Ascending aorta (tissue), 2 donors: ENCODE measurements at regions of chr3 and their contacts with region 1.

Region 1: GRCh38 chr3:136752422-136753325 is 496 bp upstream of the STAG1 start:
- DNase-seq: peak; percentile 91 to 99
- H3K4me3 ChIP-seq: peak overlapping the region; percentile 92 to 93
- H3K27ac ChIP-seq: peak overlapping the region; percentile 97 to 98
- H3K4me1 ChIP-seq: peaks cover 0 to 22% of the 10 kb centered on the region in 2 donors
- H3K27me3 ChIP-seq: no peaks in the 10 kb centered on the region
- CTCF ChIP-seq: peak in 2 of 3 experiments; percentile 39 to 97

Region 2: GRCh38 chr3:135965506-135966270 is 787.0 kb before region 1 on chr3 and contains the start of gene PPP2R3A:
- intact Hi-C with region 1: loop called (anchors 2 kb)
- DNase-seq: peak; percentile 47 to 93
- H3K4me3 ChIP-seq: peak within 1 kb of the TSS; percentile 76 to 92
- H3K27ac ChIP-seq: peak within 1 kb of the TSS; percentile 94 to 95
- H3K4me1 ChIP-seq: peaks cover 0 to 16% of the 10 kb centered on the region in 2 donors
- H3K27me3 ChIP-seq: no peaks in the 10 kb centered on the region
- CTCF ChIP-seq: no peak
- total RNA-seq, gene PPP2R3A: 10.5 TPM

Region 3: DNA sequence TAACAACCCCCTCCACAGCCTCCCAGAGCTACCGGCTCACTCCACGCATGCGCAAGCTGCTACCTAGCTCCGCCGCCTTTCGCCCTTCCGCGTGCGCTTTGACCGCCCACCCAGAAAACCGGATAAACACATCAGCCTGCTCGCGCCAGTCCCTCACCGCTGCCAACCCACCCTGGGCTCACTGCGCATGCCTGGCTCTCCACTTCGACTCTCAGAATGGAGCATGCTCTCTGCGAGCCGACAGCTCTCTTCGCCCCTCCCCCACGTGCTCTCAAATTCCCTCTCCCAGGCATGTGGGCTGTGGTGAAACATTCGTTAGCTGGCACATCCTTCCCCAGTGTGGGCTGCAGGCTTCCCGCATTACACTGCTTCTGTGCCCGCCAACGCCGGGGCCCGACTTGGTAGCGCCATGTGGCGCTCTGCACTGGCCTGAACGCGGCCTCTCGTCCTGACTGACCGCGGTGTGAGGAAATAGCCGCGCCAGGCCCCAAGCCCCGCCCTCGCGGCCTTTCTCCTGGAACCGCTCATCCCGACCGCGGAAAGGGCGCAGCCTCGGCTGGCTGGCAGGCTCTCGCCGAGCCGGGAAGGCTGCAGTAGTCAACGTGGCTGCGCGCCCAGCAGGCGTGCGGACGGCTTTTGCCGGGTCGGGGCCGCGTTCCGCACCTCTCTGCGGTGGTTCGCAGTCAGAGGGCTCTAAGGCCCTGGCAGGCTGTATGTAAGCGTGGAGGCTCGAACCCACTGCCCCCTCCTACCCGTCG is 556.1 kb before region 1 on chr3:
- intact Hi-C with region 1: loop called (anchors 1 kb)
- DNase-seq: peak; percentile 96 to 99
- H3K4me3 ChIP-seq: peak overlapping the region; percentile 69 to 93
- H3K27ac ChIP-seq: peak overlapping the region; percentile 99 to 100
- H3K4me1 ChIP-seq: peaks cover 3 to 18% of the 10 kb centered on the region in 2 donors
- H3K27me3 ChIP-seq: no peaks in the 10 kb centered on the region
- CTCF ChIP-seq: no peak

Region 4: GRCh38 chr3:136396916-136397315 is 355.8 kb before region 1 on chr3:
- intact Hi-C with region 1: loop called (anchors 10 kb)
- DNase-seq: no peak
- H3K4me3 ChIP-seq: no peak overlapping the region
- H3K27ac ChIP-seq: no peak overlapping the region
- H3K4me1 ChIP-seq: peaks cover 0 to 11% of the 10 kb centered on the region in 2 donors
- H3K27me3 ChIP-seq: no peaks in the 10 kb centered on the region
- CTCF ChIP-seq: no peak

Region 5: DNA sequence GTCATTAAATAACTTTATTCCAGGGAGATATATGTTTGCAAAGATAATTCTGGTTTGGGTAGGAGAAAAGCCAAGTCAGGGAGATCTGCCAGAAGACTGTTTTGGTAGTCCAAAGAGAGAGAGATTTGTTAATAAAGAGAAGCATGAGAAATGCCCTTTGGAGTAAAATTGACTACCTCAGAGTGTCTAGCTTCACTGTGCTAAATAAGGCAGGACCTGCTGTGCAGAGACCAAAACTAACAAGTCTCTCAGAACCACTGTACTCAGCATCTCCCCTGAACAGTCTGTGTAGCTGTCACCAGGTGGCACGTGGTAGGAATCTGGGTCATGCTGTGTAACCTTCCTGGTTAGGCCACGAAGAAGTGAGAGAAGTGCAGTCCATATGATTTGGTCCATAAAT is 34.7 kb after region 1 on chr3:
- intact Hi-C with region 1: loop called (anchors 2 kb)
- DNase-seq: peak in 1 of 2 donors; percentile 15
- H3K4me3 ChIP-seq: peak overlapping the region; percentile 49 to 50
- H3K27ac ChIP-seq: peak overlapping the region; percentile 63 to 67
- H3K4me1 ChIP-seq: peaks cover 0 to 10% of the 10 kb centered on the region in 2 donors
- H3K27me3 ChIP-seq: no peaks in the 10 kb centered on the region
- CTCF ChIP-seq: no peak

Region 6: GRCh38 chr3:136861890-136862616 is 109.4 kb after region 1 on chr3 and contains the start of gene NCK1:
- intact Hi-C with region 1: loop called (anchors 1 kb)
- DNase-seq: peak; percentile 97 to 99
- H3K4me3 ChIP-seq: peak within 1 kb of the TSS; percentile 78 to 85
- H3K27ac ChIP-seq: peak within 1 kb of the TSS; percentile 91 to 92
- H3K4me1 ChIP-seq: peaks cover 0 to 9% of the 10 kb centered on the region in 2 donors
- H3K27me3 ChIP-seq: no peaks in the 10 kb centered on the region
- CTCF ChIP-seq: peak in 2 of 3 experiments; percentile 14 to 17
- total RNA-seq, gene NCK1: 45.6 TPM

Region 7: GRCh38 chr3:137013955-137014688 is 261.4 kb after region 1 on chr3:
- intact Hi-C with region 1: loop called (anchors 1 kb)
- DNase-seq: peak; percentile 48 to 95
- H3K4me3 ChIP-seq: peak overlapping the region; percentile 55 to 81
- H3K27ac ChIP-seq: peak overlapping the region; percentile 74 to 95
- H3K4me1 ChIP-seq: peaks cover 0 to 6% of the 10 kb centered on the region in 2 donors
- H3K27me3 ChIP-seq: no peaks in the 10 kb centered on the region
- CTCF ChIP-seq: peak; percentile 80 to 91 (median 81)